Common myeloid progenitor, CD34-positive (primary cell): ENCODE measurements at regions of chr17 and their contacts with region 1.

Region 1: GRCh38 chr17:7561028-7561575 is 617 bp upstream of the SENP3 start:
- DNase-seq: peak; percentile 79 to 85 (median 84)
- H3K4me3 ChIP-seq: peak overlapping the region; percentile 68 to 84 (median 77)
- H3K27ac ChIP-seq: peak overlapping the region; percentile 75 to 89
- H3K4me1 ChIP-seq: peaks cover 13 to 68% (median 59%) of the 10 kb centered on the region in 4 experiments
- H3K27me3 ChIP-seq: no peaks in the 10 kb centered on the region

Region 2: GRCh38 chr17:7351665-7352501 is 209.2 kb before region 1 on chr17 and contains the start of gene KCTD11:
- CTCF ChIA-PET with region 1: interaction called, 15 read pairs
- POLR2A ChIA-PET with region 1: interaction called, 3 read pairs
- DNase-seq: peak in 2 of 3 donors; percentile 26 to 57
- H3K4me3 ChIP-seq: peak within 1 kb of the TSS in 6 of 7 experiments; percentile 52 to 85 (median 74)
- H3K27ac ChIP-seq: peak within 1 kb of the TSS in 1 of 2 experiments; percentile 49
- H3K4me1 ChIP-seq: peaks cover 0 to 35% (median 14%) of the 10 kb centered on the region in 4 experiments
- H3K27me3 ChIP-seq: no peaks in the 10 kb centered on the region

Region 3: DNA sequence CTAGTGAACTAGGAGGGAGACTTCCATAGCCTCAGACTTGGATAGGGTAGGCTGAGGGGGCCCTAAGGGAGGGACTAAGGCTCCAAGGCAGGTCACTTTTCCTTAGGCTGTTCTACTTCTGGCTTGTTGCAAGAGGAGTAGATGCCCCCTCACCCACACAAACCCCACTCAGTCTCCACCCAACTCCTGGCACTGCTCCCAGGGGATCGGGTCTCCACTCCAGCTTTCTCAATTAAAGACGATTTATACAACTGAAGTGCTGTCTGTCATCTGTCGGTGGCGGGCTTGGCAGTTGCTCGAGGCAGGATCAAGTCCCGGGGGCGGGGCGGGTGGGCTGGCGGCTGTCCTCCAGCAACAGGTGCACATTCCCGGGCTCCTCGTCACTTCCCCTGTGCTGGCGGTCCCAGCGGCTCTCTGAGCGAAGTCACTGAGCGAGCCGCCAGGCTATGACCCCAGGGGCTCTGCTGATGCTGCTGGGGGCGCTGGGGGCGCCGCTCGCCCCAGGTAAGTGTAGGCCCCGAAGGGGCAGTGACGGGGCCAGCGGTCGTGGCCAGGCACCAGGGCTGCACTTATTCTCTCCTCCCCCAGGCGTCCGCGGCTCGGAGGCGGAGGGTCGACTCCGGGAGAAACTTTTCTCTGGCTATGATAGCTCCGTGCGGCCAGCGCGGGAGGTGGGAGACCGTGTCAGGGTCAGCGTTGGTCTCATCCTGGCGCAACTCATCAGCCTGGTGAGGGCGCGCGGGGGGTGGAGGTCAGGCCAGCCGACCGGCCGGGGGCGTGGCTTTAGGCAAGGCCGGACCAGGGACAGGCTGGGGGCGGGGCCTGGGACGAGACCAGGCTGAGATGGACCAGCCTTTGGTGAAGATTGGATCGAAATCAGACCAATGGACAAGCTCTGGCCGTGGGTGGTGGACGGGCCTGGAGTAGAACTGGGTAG is 116.2 kb before region 1 on chr17 and contains the start of gene CHRNB1:
- CTCF ChIA-PET with region 1: interaction called, 10 read pairs
- POLR2A ChIA-PET with region 1: no interaction called
- DNase-seq: peak in 2 of 3 donors; percentile 64 to 72
- H3K4me3 ChIP-seq: peak within 1 kb of the TSS; percentile 23 to 74 (median 61)
- H3K27ac ChIP-seq: no peak within 1 kb of the TSS
- H3K4me1 ChIP-seq: peaks cover 3 to 32% (median 29%) of the 10 kb centered on the region in 4 experiments
- H3K27me3 ChIP-seq: peaks cover 4 to 73% (median 37%) of the 10 kb centered on the region in 5 experiments

Region 4: DNA sequence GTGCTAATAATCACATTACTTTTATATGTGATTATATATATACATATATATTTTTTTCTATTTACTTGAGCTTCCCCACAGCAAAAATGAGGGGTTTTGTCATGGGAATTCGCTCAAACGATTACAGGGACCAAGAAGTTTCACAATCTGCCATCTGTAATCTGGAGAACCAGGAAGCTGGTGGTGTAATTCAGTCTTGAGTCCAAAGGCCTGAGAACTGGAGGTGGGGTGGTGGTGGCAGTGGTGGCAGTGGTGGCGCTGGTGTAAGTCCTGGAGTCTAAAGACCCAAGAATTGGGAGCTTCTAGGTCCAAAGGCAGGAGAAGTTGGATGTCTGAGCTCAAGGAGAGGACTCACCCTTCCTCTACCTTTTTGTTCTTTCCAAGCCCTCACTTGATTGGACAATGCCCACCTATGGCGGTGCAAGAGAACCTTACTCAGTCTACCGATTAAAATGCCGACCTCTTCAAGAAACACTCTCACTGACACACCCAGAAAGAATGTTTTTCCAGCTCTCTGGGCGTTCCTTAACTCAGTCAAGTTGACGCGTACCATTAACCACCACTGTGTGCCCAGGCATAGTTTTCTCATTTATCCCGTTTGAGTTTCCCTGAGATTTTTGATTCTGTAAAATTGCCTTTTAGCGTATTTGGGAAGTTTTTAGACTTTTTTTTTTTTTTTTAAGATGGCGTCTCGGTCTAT is 45.0 kb before region 1 on chr17:
- CTCF ChIA-PET with region 1: interaction called, 515 read pairs
- POLR2A ChIA-PET with region 1: interaction called, 45 read pairs
- DNase-seq: no peak
- H3K4me3 ChIP-seq: no peak overlapping the region
- H3K27ac ChIP-seq: no peak overlapping the region
- H3K4me1 ChIP-seq: peaks cover 0 to 4% (median 0%) of the 10 kb centered on the region in 4 experiments
- H3K27me3 ChIP-seq: no peaks in the 10 kb centered on the region

Region 5: GRCh38 chr17:7530023-7530900 is 30.8 kb before region 1 on chr17:
- CTCF ChIA-PET with region 1: interaction called, 18 read pairs
- POLR2A ChIA-PET with region 1: no interaction called
- DNase-seq: no peak
- H3K4me3 ChIP-seq: no peak overlapping the region
- H3K27ac ChIP-seq: no peak overlapping the region
- H3K4me1 ChIP-seq: no peaks in the 10 kb centered on the region
- H3K27me3 ChIP-seq: no peaks in the 10 kb centered on the region

Region 6: DNA sequence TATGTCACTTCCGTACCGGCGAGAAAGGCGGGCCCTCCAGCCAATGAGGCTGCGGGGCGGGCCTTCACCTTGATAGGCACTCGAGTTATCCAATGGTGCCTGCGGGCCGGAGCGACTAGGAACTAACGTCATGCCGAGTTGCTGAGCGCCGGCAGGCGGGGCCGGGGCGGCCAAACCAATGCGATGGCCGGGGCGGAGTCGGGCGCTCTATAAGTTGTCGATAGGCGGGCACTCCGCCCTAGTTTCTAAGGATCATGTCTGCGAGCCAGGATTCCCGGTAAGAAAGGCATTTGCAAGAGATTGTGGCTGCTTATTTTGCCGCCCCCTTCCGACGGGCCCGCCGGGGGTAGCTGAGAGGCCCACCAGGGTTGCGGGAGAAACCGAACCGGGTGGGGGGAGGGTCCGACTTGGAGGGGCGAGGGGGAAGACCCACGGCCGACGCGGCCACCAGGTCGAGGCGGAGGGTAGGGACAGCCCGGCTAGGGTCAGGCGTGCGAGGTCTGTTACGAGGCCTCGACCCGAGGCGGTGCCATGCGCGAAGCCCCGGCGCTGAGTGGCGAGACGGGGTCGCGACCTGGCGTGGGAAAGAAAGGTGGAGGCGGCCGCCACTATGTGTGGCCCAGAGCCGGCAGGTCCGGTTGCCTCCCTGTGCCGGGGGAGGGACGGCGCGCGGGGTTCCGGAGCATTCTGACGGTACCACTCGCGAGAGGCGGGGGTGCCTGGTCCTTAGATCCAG is 11.7 kb after region 1 on chr17:
- CTCF ChIA-PET with region 1: interaction called, 25 read pairs
- POLR2A ChIA-PET with region 1: interaction called, 6 read pairs
- DNase-seq: peak; percentile 99 to 100 (median 100)
- H3K4me3 ChIP-seq: peak overlapping the region; percentile 86 to 100 (median 93)
- H3K27ac ChIP-seq: peak overlapping the region; percentile 83 to 94
- H3K4me1 ChIP-seq: peaks cover 17 to 52% (median 33%) of the 10 kb centered on the region in 4 experiments
- H3K27me3 ChIP-seq: no peaks in the 10 kb centered on the region

Region 7: GRCh38 chr17:7589204-7589868 is 28.2 kb after region 1 on chr17:
- CTCF ChIA-PET with region 1: interaction called, 31 read pairs
- POLR2A ChIA-PET with region 1: interaction called, 5 read pairs
- DNase-seq: peak; percentile 77 to 87 (median 78)
- H3K4me3 ChIP-seq: peak overlapping the region in 2 of 7 experiments; percentile 28 to 40
- H3K27ac ChIP-seq: no peak overlapping the region
- H3K4me1 ChIP-seq: peaks cover 0 to 30% (median 18%) of the 10 kb centered on the region in 4 experiments
- H3K27me3 ChIP-seq: no peaks in the 10 kb centered on the region

Region 8: DNA sequence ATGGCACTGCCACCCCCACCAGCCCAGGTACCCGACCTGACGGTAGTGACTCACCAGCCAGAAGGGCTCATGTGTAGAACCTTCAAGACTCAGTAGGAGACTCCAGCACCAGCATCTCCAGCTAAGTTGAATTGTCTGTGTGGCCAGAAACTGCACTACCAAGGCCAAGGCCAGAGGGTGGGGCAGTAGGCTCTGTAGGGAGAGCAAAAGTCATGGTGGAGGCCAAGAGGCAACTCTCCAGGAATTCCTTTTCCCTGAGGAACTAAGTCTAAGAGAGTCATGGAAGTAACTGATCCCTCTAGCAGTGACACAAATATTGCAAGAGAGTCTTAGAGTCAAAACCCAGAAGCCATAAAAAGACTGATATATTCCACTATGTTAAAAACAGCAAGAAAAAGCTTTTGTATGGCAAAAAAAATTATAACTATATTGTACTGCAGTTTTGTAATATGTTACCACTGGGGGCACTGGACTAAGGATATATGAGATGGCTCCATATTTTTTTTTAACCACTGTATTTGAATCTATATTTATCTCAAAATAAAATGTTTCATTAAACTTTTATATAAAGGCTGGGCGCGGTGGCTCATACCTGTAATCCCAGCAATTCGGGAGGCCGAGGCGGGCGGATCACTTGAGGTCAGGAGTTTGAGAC is 411.2 kb after region 1 on chr17:
- CTCF ChIA-PET with region 1: no interaction called
- POLR2A ChIA-PET with region 1: no interaction called
- DNase-seq: peak in 2 of 3 donors; percentile 45 to 52
- H3K4me3 ChIP-seq: no peak overlapping the region
- H3K27ac ChIP-seq: no peak overlapping the region
- H3K4me1 ChIP-seq: peaks cover 0 to 3% (median 0%) of the 10 kb centered on the region in 4 experiments
- H3K27me3 ChIP-seq: no peaks in the 10 kb centered on the region